ENCODE measurements at regions of chr15 and their contacts with region 1.

Region 1: DNA sequence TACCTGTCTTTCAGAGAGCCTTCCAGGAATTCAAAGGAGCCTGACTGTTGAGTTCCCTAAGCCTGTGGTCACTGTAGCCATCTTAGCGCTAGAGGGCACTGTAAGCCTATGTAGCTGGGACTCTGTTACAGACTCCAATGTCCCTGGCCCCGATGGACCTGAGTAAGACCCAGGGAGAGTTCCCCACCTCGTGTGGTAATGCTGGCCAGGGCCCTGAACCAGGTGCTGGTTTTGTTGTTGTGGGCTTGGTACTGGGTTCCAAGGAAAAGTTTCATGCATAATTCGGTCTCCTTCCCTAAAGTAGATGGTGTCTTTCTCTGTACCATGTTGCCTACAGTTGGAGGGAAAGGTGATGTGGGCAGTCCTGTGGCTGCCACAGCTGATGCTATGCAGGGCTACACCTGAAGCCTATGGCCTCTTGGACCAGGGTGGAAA is 32.4 kb downstream of the CDAN1 start:
- DNase-seq: peak; percentile 79
- H3K4me3 ChIP-seq: no peak overlapping the region
- H3K27ac ChIP-seq: no peak overlapping the region
- H3K4me1 ChIP-seq: peaks cover 12% of the 10 kb centered on the region
- H3K27me3 ChIP-seq: no peaks in the 10 kb centered on the region
- CTCF ChIP-seq: peak; percentile 81 to 85
- POLR2A ChIP-seq: no peak

Region 2: DNA sequence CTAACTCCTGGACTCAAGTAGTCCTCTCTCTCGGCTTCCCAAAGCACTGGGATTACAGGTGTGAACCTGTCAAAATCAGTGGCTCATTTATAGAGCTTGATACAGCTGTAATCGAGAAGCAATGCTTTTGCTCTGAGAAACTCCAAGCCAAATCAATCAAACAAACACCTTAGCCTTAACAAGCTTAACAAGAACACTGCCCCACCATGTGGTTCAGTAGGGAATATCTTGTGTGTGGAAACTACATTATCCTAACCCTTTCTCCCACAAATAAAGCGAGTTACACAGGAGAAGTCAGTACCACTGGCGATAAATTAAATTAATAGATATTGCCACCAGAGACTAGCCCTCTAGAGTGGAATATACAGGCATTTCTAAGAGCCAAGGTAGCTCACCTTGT is 18.5 kb after region 1 on chr15:
- CTCF ChIA-PET with region 1: interaction called, 37 read pairs
- POLR2A ChIA-PET with region 1: no interaction called
- dilution Hi-C with region 1: no loop called
- intact Hi-C with region 1: no loop called
- DNase-seq: peak; percentile 13
- H3K4me3 ChIP-seq: no peak overlapping the region
- H3K27ac ChIP-seq: no peak overlapping the region
- H3K4me1 ChIP-seq: no peaks in the 10 kb centered on the region
- H3K27me3 ChIP-seq: no peaks in the 10 kb centered on the region
- CTCF ChIP-seq: no peak
- POLR2A ChIP-seq: no peak

Region 3: GRCh38 chr15:42984493-42985034 is 280.1 kb after region 1 on chr15:
- CTCF ChIA-PET with region 1: no interaction called
- POLR2A ChIA-PET with region 1: no interaction called
- dilution Hi-C with region 1: no loop called
- intact Hi-C with region 1: no loop called
- DNase-seq: no peak
- H3K4me3 ChIP-seq: no peak overlapping the region
- H3K27ac ChIP-seq: no peak overlapping the region
- H3K4me1 ChIP-seq: no peaks in the 10 kb centered on the region
- H3K27me3 ChIP-seq: no peaks in the 10 kb centered on the region
- CTCF ChIP-seq: no peak
- POLR2A ChIP-seq: no peak

Region 4: GRCh38 chr15:43029476-43029875 is 325.0 kb after region 1 on chr15:
- CTCF ChIA-PET with region 1: no interaction called
- POLR2A ChIA-PET with region 1: no interaction called
- dilution Hi-C with region 1: no loop called
- intact Hi-C with region 1: loop called (anchors 10 kb)
- DNase-seq: no peak
- H3K4me3 ChIP-seq: no peak overlapping the region
- H3K27ac ChIP-seq: no peak overlapping the region
- H3K4me1 ChIP-seq: no peaks in the 10 kb centered on the region
- H3K27me3 ChIP-seq: no peaks in the 10 kb centered on the region
- CTCF ChIP-seq: no peak
- POLR2A ChIP-seq: no peak